ENCODE measurements at regions of chr18 and their contacts with region 1.

Region 1: GRCh38 chr18:48675352-48675761 is 136.5 kb downstream of the CTIF start:
- DNase-seq: peak; percentile 83 to 94
- H3K4me3 ChIP-seq: no peak overlapping the region
- H3K27ac ChIP-seq: peak overlapping the region; percentile 85 to 97
- H3K4me1 ChIP-seq: peaks cover 0 to 54% (median 38%) of the 10 kb centered on the region in 4 donors
- H3K27me3 ChIP-seq: no peaks in the 10 kb centered on the region
- CTCF ChIP-seq: peak; percentile 94 to 96

Region 2: GRCh38 chr18:48951448-48952286 is 276.3 kb after region 1 on chr18:
- intact Hi-C with region 1: loop called (anchors 10 kb)
- DNase-seq: peak; percentile 88 to 95
- H3K4me3 ChIP-seq: peak overlapping the region; percentile 58 to 98
- H3K27ac ChIP-seq: peak overlapping the region; percentile 88 to 99
- H3K4me1 ChIP-seq: peaks cover 0 to 44% (median 35%) of the 10 kb centered on the region in 4 donors
- H3K27me3 ChIP-seq: no peaks in the 10 kb centered on the region
- CTCF ChIP-seq: peak in 1 of 2 experiments; percentile 30

Region 3: DNA sequence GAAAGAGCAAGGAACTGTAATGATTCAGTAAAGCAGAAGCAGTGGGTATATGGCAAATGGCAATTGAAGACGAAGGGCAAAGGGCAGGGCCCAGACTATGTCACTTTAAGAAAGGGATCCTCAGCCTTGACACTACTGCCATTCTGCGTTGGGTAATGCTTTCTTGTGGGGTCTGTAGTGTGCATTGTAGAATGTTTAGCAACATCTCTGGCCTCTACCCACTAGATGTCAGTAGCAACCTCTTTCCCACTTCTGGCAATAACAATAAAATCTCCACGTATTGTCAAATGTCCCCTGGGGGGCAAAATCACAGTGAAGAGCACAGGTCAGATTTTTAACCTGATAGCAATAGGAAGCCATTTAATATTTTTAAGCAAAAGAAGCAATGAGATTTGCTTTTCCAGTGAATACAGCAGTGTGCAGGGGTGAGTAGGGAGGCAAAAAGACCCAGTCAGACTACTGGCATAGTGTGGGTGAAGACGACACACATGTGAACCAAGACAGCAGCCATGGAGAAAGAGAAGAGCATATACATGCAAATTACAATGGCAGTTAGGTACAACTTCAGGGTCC is 575.5 kb after region 1 on chr18:
- intact Hi-C with region 1: loop called (anchors 5 kb)
- DNase-seq: no peak
- H3K4me3 ChIP-seq: no peak overlapping the region
- H3K27ac ChIP-seq: no peak overlapping the region
- H3K4me1 ChIP-seq: peaks cover 0 to 32% (median 0%) of the 10 kb centered on the region in 4 donors
- H3K27me3 ChIP-seq: no peaks in the 10 kb centered on the region
- CTCF ChIP-seq: no peak

Region 4: DNA sequence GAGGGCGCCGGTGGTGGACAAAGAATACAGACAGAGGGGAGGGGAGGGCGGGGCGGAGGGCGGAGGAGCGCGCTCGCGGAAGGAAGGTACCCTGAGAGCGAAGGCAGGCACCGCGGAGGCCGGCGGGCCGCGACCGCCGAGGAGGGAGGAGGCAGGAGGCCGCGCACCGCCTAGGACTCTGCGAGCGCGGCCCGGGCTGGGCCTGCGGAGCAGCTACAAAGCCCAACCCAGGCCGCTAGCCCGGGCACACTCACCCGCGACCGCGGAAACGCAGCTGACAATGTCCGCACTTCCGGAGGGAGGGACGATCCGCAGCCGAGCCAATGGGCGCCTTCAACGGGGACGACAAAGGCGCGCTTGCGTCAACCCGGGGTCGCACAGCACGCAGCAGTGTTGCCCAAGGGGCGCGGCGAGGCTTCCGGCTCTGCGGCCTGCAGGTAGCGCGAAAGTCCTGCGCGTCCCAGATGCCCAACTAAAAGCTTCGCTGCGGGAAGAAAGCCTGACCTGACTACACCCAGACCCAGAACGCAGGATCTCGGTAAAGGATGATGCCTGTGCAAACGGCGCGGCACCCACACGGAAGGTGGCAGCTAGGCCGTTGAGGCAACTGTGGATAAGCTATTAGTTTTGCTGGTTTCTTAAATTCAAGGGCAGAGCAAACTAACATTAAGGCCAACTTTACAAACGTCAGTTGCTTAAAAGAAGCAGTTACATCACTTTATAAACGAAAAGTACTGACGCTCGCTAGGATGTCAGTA is 811.8 kb after region 1 on chr18 and contains the start of gene C18orf32:
- intact Hi-C with region 1: loop called (anchors 5 kb)
- DNase-seq: peak; percentile 93 to 97
- H3K4me3 ChIP-seq: peak within 1 kb of the TSS; percentile 73 to 88
- H3K27ac ChIP-seq: peak within 1 kb of the TSS; percentile 89 to 98
- H3K4me1 ChIP-seq: peaks cover 0 to 36% (median 18%) of the 10 kb centered on the region in 4 donors
- H3K27me3 ChIP-seq: no peaks in the 10 kb centered on the region
- CTCF ChIP-seq: no peak

Measured in tibial artery (tissue), 4 donors.